ENCODE measurements at regions of chr16 and their contacts with region 1.

Region 1: DNA sequence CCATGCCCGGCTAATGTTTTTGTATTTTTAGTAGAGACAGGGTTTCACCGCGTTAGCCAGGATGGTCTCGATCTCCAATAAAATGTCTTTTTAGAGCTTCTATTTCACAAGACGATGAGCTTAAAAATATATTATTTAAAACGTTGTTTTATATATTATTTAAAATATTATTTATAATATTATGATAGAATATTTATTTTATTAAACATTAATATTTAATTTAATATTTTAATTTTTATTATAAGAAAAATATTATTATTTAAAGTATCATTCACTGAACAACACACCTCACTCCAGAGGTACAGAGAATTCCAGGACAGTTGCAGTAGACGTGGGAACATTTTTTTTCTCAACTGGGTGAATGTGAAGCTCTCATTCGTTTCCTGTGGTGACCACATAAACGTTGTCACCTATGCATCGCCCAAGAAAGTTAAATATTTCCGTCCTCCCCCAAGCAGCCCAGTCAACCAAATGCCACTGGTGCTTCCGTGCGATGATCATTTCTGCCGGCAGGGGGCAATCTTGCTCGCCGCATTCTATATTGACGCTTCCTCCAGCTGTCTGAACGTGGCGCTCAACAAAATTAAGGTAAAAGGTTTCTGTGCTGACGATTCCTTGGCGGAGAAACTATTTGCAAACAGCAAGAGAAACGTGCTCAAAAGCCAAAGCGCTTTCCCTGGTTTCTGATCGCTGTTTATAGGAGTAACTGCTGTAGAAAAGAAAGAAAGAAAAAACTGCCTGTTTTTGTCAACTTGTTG is 41.7 kb upstream of the PRSS54 start:
- DNase-seq: peak; percentile 62
- H3K4me3 ChIP-seq: no peak overlapping the region
- H3K27ac ChIP-seq: no peak overlapping the region
- H3K4me1 ChIP-seq: no peaks in the 10 kb centered on the region
- H3K27me3 ChIP-seq: no peaks in the 10 kb centered on the region
- CTCF ChIP-seq: peak; percentile 87 to 93

Region 2: GRCh38 chr16:58176608-58177352 is 159.7 kb before region 1 on chr16:
- CTCF ChIA-PET with region 1: no interaction called
- dilution Hi-C with region 1: no loop called
- in situ Hi-C with region 1: no loop called
- intact Hi-C with region 1: no loop called
- DNase-seq: no peak
- H3K4me3 ChIP-seq: no peak overlapping the region
- H3K27ac ChIP-seq: no peak overlapping the region
- H3K4me1 ChIP-seq: no peaks in the 10 kb centered on the region
- H3K27me3 ChIP-seq: no peaks in the 10 kb centered on the region
- CTCF ChIP-seq: no peak

Region 3: DNA sequence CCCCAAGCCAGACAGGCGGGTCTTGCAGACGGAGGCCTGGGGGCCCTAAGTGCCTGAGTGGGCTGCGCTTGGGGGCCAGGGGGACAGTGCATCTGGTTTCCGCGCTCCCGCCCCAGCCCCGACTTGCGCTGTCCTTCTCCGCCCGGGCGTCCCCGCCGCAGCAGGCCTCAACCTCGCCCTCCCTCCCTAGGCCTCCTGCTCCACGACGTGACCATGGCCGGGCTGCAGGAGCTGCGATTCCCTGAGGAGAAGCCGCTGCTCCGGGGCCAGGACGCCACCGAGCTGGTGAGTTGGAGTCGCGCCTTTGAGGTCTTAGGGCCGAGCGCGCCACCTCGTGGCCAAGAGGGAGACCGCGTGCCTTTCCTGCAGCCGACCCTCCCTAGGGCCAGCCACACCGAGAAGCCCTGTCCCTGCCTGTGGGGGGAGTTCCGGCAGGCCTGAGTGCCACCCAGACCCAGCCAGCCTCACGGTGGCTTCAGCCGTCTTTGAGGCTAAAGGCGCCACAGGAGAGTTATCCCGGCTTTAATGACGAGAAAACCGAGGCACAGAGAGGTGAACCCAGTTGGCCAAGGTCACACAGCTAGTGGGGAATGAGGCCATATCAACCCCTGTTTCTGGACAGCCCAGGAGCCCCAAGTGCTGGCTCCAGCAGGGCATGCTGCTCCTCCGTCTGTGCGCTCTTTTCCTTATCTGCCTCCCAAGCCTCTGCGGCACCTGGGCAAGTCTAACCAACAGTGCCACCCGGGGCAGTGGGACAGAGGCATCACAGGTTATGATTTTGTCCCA is 151.2 kb after region 1 on chr16:
- CTCF ChIA-PET with region 1: interaction called, 5 read pairs
- dilution Hi-C with region 1: no loop called
- in situ Hi-C with region 1: loop called (anchors 5 kb)
- intact Hi-C with region 1: loop called (anchors 1 kb)
- DNase-seq: peak; percentile 51
- H3K4me3 ChIP-seq: peak overlapping the region in 2 of 3 experiments; percentile 33 to 40
- H3K27ac ChIP-seq: no peak overlapping the region
- H3K4me1 ChIP-seq: peaks cover 5% of the 10 kb centered on the region
- H3K27me3 ChIP-seq: no peaks in the 10 kb centered on the region
- CTCF ChIP-seq: peak; percentile 69 to 94

Region 4: GRCh38 chr16:58506241-58507194 is 170.0 kb after region 1 on chr16:
- CTCF ChIA-PET with region 1: interaction called, 12 read pairs
- dilution Hi-C with region 1: no loop called
- in situ Hi-C with region 1: no loop called
- intact Hi-C with region 1: no loop called
- DNase-seq: no peak
- H3K4me3 ChIP-seq: no peak overlapping the region
- H3K27ac ChIP-seq: no peak overlapping the region
- H3K4me1 ChIP-seq: peaks cover under 1% of the 10 kb centered on the region
- H3K27me3 ChIP-seq: no peaks in the 10 kb centered on the region
- CTCF ChIP-seq: no peak

Region 5: GRCh38 chr16:58661199-58661830 is 324.8 kb after region 1 on chr16:
- CTCF ChIA-PET with region 1: interaction called, 5 read pairs
- dilution Hi-C with region 1: no loop called
- in situ Hi-C with region 1: loop called (anchors 25 kb)
- intact Hi-C with region 1: loop called (anchors 2 kb)
- DNase-seq: peak; percentile 81
- H3K4me3 ChIP-seq: no peak overlapping the region
- H3K27ac ChIP-seq: no peak overlapping the region
- H3K4me1 ChIP-seq: no peaks in the 10 kb centered on the region
- H3K27me3 ChIP-seq: no peaks in the 10 kb centered on the region
- CTCF ChIP-seq: peak; percentile 70 to 76

Measured in mammary epithelial cell (primary cell).